Kidney (tissue), 22 donors: ENCODE measurements at regions of chr1 and their contacts with region 1.

Region 1: GRCh38 chr1:224127925-224128819 is 14.3 kb downstream of the FBXO28 start:
- DNase-seq: no peak
- H3K4me3 ChIP-seq: no peak overlapping the region
- H3K27ac ChIP-seq: no peak overlapping the region
- H3K4me1 ChIP-seq: no peaks in the 10 kb centered on the region
- H3K27me3 ChIP-seq: no peaks in the 10 kb centered on the region
- CTCF ChIP-seq: no peak

Region 2: DNA sequence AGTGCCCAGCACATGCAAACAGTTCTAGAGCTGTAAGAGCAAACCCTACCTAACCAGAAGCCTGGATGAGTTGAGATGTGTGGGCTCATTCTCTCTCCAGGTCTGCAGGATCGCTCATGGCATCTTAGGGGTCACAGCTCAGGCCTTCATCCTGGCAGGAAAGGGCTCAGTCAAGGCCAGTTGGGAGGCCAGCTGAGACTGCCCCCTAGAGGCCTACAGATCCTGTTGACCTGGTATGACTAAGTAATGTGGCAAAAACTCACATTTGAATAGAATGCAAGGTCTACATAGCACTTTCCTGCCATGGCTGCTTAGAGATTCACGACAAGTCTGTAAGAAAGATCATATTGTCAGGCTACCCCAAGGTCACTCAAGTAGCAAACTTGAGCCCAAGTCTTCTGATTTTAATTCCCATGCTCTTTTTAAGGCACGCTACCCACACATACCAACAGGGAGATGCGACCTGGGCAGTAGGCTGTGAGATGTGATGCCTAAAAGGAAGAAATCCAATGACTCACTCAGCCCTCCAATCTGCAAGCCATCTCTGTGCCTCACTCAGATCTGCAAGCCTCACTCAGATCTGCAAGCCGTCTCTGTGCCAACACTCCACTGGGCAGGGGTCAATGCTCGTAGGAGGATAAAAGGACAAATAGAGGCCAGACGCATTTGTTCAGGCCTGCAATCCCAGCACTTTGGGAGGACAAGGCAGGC is 457.6 kb before region 1 on chr1:
- intact Hi-C with region 1: no loop called
- DNase-seq: peak in 4 of 5 donors; percentile 44 to 55 (median 48)
- H3K4me3 ChIP-seq: no peak overlapping the region
- H3K27ac ChIP-seq: no peak overlapping the region
- H3K4me1 ChIP-seq: no peaks in the 10 kb centered on the region
- H3K27me3 ChIP-seq: no peaks in the 10 kb centered on the region
- CTCF ChIP-seq: peak; percentile 51

Region 3: DNA sequence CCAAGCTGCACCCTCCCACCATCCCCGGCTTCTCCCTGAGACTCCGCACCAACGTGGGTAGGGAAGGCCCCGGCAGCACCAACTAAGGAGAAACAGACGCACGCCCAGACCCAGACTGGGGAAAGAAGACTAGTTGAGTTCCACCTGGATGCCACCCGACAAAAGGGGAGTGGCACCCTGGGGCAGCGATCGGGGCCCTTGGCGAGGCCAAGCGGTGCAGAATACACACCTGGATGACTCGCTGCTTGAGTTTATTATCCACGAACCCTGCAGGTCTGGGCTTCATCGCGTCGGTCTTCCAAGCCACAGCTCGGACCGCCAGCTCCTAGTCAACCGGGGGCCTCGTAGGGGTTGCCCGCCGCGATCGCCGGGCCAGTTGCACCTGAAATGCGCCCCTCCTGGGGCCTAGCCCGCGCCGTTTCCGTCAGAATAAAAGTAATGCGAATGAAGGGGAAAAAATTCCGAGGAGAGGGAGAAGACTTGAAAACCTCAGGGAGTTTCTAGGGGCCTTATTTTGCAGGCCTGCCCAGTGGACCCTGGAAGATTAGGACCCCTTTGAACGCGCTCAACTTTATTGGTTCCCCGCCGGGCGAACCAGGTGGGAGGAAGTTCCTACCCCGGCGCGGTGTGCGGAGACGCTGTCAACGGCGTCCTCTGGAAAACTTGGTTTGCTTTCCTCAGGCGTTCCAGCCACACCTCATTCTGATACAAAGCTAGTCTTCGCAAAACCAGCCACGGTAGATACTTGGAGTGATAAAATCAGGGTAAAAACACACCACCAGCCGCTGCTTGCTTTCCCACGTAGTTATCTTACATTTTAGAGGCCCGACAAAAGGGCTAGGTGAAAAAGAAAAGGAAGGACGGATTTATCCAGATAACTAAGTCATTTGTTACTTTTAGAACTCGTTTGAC is 201.9 kb after region 1 on chr1 and contains the start of gene NVL:
- intact Hi-C with region 1: loop called (anchors 10 kb)
- DNase-seq: peak; percentile 83 to 97 (median 93)
- H3K4me3 ChIP-seq: peak within 1 kb of the TSS; percentile 91 to 97 (median 95)
- H3K27ac ChIP-seq: peak within 1 kb of the TSS; percentile 94 to 97
- H3K4me1 ChIP-seq: peaks cover 0 to 4% (median 0%) of the 10 kb centered on the region in 3 donors
- H3K27me3 ChIP-seq: no peaks in the 10 kb centered on the region
- CTCF ChIP-seq: no peak
- total RNA-seq, gene NVL: 24.0 TPM

Region 4: GRCh38 chr1:224343679-224344078 is 215.5 kb after region 1 on chr1:
- intact Hi-C with region 1: no loop called
- DNase-seq: no peak
- H3K4me3 ChIP-seq: no peak overlapping the region
- H3K27ac ChIP-seq: no peak overlapping the region
- H3K4me1 ChIP-seq: peaks cover 0 to 3% (median 0%) of the 10 kb centered on the region in 3 donors
- H3K27me3 ChIP-seq: no peaks in the 10 kb centered on the region
- CTCF ChIP-seq: no peak